Activated CD8-positive, alpha-beta T cell treated with anti-CD3 and anti-CD28 coated beads, Interleukin-2, amount 10 ng/mL, durations not matched to agents 7 days and 5 days (primary cell): ENCODE measurements at regions of chr3 and their contacts with region 1.

Region 1: DNA sequence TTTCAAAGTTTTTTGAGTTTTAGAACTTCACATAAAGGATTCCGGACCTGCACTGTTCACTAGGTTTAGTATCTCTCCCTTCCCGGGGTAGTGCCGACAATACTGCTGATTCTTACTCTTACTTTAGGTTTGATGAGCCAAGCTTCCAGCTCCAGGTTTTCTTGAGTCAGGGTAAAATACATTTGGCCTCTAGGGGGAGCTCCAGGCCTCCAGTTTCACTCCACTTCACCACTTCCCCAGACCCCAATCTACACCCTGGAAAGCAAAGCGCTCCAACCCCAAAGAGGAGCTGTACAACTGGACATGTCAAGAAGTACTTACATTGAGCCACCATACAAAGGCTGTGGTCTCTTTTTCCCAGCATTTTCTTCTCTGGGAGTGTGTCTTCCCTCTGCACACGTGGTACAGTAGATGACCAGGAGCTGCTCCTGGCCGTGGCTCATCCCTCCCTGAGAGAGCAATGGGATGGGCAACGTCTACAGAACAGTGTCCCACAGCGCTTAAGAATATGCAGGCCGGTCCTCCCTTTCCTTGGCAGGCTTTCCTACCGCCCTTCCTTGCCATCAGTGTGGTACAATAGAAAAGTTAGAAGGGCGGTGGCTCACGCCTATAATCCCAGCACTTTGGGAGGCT is 93.9 kb upstream of the CCDC80 start:
- DNase-seq: peak; percentile 83
- ATAC-seq: peak; percentile 75
- H3K4me3 Mint-ChIP-seq: no peak overlapping the region
- H3K27ac Mint-ChIP-seq: no peak overlapping the region
- H3K4me1 Mint-ChIP-seq: peaks cover 45% of the 10 kb centered on the region
- H3K27me3 Mint-ChIP-seq: no peaks in the 10 kb centered on the region

Region 2: DNA sequence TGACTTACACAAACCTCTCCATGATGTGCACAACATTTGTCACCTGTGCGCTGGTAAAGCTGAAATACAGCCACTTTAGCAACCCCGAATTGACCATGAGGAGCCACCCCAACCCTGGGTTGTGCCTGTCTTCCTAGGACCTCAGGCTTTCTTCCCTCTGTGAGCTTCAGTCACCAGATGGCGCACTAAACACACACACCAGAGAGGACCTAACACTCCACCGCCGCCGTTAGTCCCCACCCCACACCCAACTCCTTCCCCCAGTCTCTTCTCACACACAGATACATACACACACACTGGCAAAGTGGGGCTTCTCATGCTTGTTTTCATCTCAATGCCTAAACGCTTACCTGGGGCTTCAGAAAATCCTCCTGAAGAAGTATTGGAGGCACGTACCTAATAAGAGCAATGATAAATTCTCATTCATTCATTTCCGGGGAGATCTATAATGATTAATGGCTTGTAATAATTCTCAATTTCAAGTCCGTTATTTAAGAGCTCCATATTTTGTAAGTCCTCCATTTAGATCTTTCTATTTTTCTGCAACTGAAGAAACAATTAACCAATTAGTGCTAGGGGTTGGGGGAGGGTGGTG is 91.8 kb before region 1 on chr3:
- CTCF ChIA-PET with region 1: interaction called, 132 read pairs
- POLR2A ChIA-PET with region 1: no interaction called
- DNase-seq: peak; percentile 92
- ATAC-seq: peak; percentile 100
- H3K4me3 Mint-ChIP-seq: peak overlapping the region; percentile 59
- H3K27ac Mint-ChIP-seq: peak overlapping the region; percentile 64
- H3K4me1 Mint-ChIP-seq: peaks cover 21% of the 10 kb centered on the region
- H3K27me3 Mint-ChIP-seq: peaks cover 10% of the 10 kb centered on the region

Region 3: DNA sequence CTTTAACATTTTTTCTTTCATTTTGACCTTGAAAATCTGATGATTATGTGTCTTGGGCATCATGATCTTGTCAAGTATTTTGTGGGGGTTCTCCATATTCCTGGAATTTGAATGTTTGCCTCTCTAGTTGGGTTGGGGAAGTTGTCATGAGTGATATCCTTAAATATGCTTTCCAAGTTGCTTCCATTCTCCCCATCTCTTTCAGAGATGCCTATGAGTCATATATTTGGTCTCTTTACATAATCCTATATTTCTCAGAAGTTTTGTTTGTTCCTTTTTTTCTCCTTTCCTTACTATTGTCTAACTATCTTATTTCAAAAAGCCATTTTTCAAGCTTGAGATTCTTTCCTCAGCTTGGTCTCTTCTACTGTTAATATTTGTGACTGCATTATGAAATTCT is 24.9 kb before region 1 on chr3:
- CTCF ChIA-PET with region 1: interaction called, 10 read pairs
- POLR2A ChIA-PET with region 1: no interaction called
- DNase-seq: no peak
- ATAC-seq: no peak
- H3K4me3 Mint-ChIP-seq: no peak overlapping the region
- H3K27ac Mint-ChIP-seq: no peak overlapping the region
- H3K4me1 Mint-ChIP-seq: no peaks in the 10 kb centered on the region
- H3K27me3 Mint-ChIP-seq: peaks cover 48% of the 10 kb centered on the region

Region 4: GRCh38 chr3:112773864-112774590 is 39.2 kb after region 1 on chr3:
- CTCF ChIA-PET with region 1: interaction called, 10 read pairs
- POLR2A ChIA-PET with region 1: no interaction called
- DNase-seq: peak; percentile 27
- ATAC-seq: peak; percentile 67
- H3K4me3 Mint-ChIP-seq: no peak overlapping the region
- H3K27ac Mint-ChIP-seq: peak overlapping the region; percentile 26
- H3K4me1 Mint-ChIP-seq: peaks cover 13% of the 10 kb centered on the region
- H3K27me3 Mint-ChIP-seq: peaks cover 4% of the 10 kb centered on the region

Region 5: GRCh38 chr3:112979240-112979832 is 244.5 kb after region 1 on chr3:
- CTCF ChIA-PET with region 1: interaction called, 118 read pairs
- POLR2A ChIA-PET with region 1: no interaction called
- DNase-seq: peak; percentile 47
- ATAC-seq: no peak
- H3K4me3 Mint-ChIP-seq: no peak overlapping the region
- H3K27ac Mint-ChIP-seq: no peak overlapping the region
- H3K4me1 Mint-ChIP-seq: peaks cover 37% of the 10 kb centered on the region
- H3K27me3 Mint-ChIP-seq: no peaks in the 10 kb centered on the region

Region 6: GRCh38 chr3:113002679-113003078 is 267.8 kb after region 1 on chr3:
- CTCF ChIA-PET with region 1: interaction called, 15 read pairs
- POLR2A ChIA-PET with region 1: interaction called, 4 read pairs
- DNase-seq: peak; percentile 69
- ATAC-seq: peak; percentile 67
- H3K4me3 Mint-ChIP-seq: no peak overlapping the region
- H3K27ac Mint-ChIP-seq: peak overlapping the region; percentile 86
- H3K4me1 Mint-ChIP-seq: peaks cover 61% of the 10 kb centered on the region
- H3K27me3 Mint-ChIP-seq: no peaks in the 10 kb centered on the region

Region 7: DNA sequence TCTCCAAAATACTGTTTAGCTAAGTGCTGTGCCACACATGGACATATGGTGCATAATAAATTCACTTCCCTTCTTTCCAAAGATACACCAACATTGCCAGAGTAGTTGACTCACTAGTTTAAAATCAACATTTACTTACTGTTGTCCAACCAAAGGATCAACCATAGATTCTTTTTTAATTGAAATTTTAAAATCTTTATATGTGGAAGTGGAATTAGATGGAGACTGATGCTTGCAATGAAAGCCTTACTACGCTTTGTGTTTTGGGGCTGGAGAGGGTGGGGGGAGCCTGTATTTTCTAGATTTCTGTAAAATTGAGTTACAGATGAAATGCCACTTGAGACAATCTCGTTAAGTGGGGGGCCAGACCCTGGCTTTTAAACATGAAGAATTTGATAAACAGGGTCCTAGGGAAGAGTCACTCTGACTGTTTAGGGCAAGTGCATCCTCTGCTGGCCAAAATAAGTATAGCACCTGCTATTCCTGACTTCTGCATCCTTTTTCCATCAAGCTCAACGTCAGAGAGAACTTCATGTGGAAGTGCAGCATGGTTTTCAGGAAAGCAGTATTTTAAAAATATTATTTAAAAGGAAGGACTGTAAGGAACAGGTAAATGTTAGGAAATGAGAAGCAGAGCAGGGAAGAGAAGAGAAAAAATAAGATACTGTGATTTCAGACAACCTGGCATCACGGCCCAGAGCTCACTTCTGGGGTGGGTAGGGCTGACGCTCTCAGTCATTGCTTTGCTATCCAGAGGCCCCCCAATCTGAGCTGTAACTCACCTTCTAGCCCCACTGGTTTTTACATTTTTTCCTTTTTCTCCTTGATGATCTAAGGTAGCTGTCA is 553.2 kb after region 1 on chr3:
- CTCF ChIA-PET with region 1: interaction called, 10 read pairs
- POLR2A ChIA-PET with region 1: no interaction called
- DNase-seq: peak; percentile 62
- ATAC-seq: no peak
- H3K4me3 Mint-ChIP-seq: no peak overlapping the region
- H3K27ac Mint-ChIP-seq: no peak overlapping the region
- H3K4me1 Mint-ChIP-seq: no peaks in the 10 kb centered on the region
- H3K27me3 Mint-ChIP-seq: no peaks in the 10 kb centered on the region